ENCODE measurements at regions of chr4 and their contacts with region 1.

Region 1: GRCh38 chr4:73019462-73020047 is 50.0 kb downstream of the COX18 start:
- DNase-seq: no peak
- ATAC-seq: peak; percentile 48; the same call in 1 of the 3 replicates
- H3K4me3 ChIP-seq: no peak overlapping the region
- H3K27ac ChIP-seq: no peak overlapping the region
- H3K4me1 ChIP-seq: no peaks in the 10 kb centered on the region
- H3K27me3 ChIP-seq: no peaks in the 10 kb centered on the region
- CTCF ChIP-seq: peak; percentile 42 to 67 (median 65); a peak in 5 of 6 replicates
- EP300 ChIP-seq: no peak
- POLR2A ChIP-seq: no peak
- RAD21 ChIP-seq: peak; percentile 87

Region 2: GRCh38 chr4:72505314-72505744 is 514.2 kb before region 1 on chr4:
- CTCF ChIA-PET with region 1: interaction called, 7 read pairs
- POLR2A ChIA-PET with region 1: no interaction called
- RAD21 ChIA-PET with region 1: no interaction called
- SMC1A ChIA-PET with region 1: interaction called, 4 read pairs
- in situ Hi-C with region 1: loop called (anchors 5 kb)
- intact Hi-C with region 1: loop called (anchors 1 kb)
- DNase-seq: no peak
- ATAC-seq: peak; percentile 88
- H3K4me3 ChIP-seq: no peak overlapping the region
- H3K27ac ChIP-seq: no peak overlapping the region
- H3K4me1 ChIP-seq: no peaks in the 10 kb centered on the region
- H3K27me3 ChIP-seq: no peaks in the 10 kb centered on the region
- CTCF ChIP-seq: peak; percentile 62 to 66 (median 63); a peak in 5 of 6 replicates
- EP300 ChIP-seq: no peak
- POLR2A ChIP-seq: no peak
- RAD21 ChIP-seq: peak; percentile 71

Region 3: GRCh38 chr4:72701987-72702819 is 317.4 kb before region 1 on chr4:
- CTCF ChIA-PET with region 1: interaction called, 10 read pairs
- POLR2A ChIA-PET with region 1: no interaction called
- RAD21 ChIA-PET with region 1: interaction called, 3 read pairs
- SMC1A ChIA-PET with region 1: interaction called, 4 read pairs
- in situ Hi-C with region 1: loop called (anchors 5 kb)
- intact Hi-C with region 1: loop called (anchors 1 kb)
- DNase-seq: no peak
- ATAC-seq: peak; percentile 81
- H3K4me3 ChIP-seq: peak overlapping the region; percentile 22; the same call in 1 of the 2 replicates
- H3K27ac ChIP-seq: no peak overlapping the region
- H3K4me1 ChIP-seq: no peaks in the 10 kb centered on the region
- H3K27me3 ChIP-seq: no peaks in the 10 kb centered on the region
- CTCF ChIP-seq: peak; percentile 51 to 73 (median 67); a peak in 5 of 6 replicates
- EP300 ChIP-seq: no peak
- POLR2A ChIP-seq: no peak
- RAD21 ChIP-seq: peak; percentile 78

Region 4: GRCh38 chr4:72786401-72786990 is 233.1 kb before region 1 on chr4:
- CTCF ChIA-PET with region 1: no interaction called
- POLR2A ChIA-PET with region 1: no interaction called
- RAD21 ChIA-PET with region 1: no interaction called
- SMC1A ChIA-PET with region 1: no interaction called
- in situ Hi-C with region 1: no loop called
- intact Hi-C with region 1: loop called (anchors 10 kb)
- DNase-seq: no peak
- ATAC-seq: no peak
- H3K4me3 ChIP-seq: no peak overlapping the region
- H3K27ac ChIP-seq: no peak overlapping the region
- H3K4me1 ChIP-seq: no peaks in the 10 kb centered on the region
- H3K27me3 ChIP-seq: no peaks in the 10 kb centered on the region
- CTCF ChIP-seq: no peak
- EP300 ChIP-seq: no peak
- POLR2A ChIP-seq: no peak
- RAD21 ChIP-seq: no peak

Measured in GM12878 (cell line).